ENCODE measurements at regions of chr12 and their contacts with region 1.

Region 1: GRCh38 chr12:94033101-94033500 is 115.3 kb upstream of the PLXNC1 start:
- DNase-seq: peak in 7 of 9 donors; percentile 28 to 68 (median 52)
- ATAC-seq: peak; percentile 90
- H3K4me3 ChIP-seq: peak overlapping the region; percentile 4
- H3K4me3 Mint-ChIP-seq: peak overlapping the region; percentile 44 to 89 (median 74)
- H3K27ac ChIP-seq: peak overlapping the region; percentile 52
- H3K27ac Mint-ChIP-seq: peak overlapping the region; percentile 47 to 97 (median 88)
- H3K4me1 ChIP-seq: peaks cover 0 to 45% of the 10 kb centered on the region in 2 donors
- H3K4me1 Mint-ChIP-seq: peaks cover 24 to 65% (median 52%) of the 10 kb centered on the region in 7 donors
- H3K27me3 ChIP-seq: no peaks in the 10 kb centered on the region
- H3K27me3 Mint-ChIP-seq: no peaks in the 10 kb centered on the region

Region 2: GRCh38 chr12:93742110-93742934 is 290.8 kb before region 1 on chr12:
- CTCF ChIA-PET with region 1: no interaction called
- POLR2A ChIA-PET with region 1: no interaction called
- intact Hi-C with region 1: loop called in 1 of 2 experiments (anchors 2 kb)
- DNase-seq: peak; percentile 25 to 63 (median 40)
- ATAC-seq: peak; percentile 96
- H3K4me3 ChIP-seq: peak overlapping the region; percentile 83
- H3K4me3 Mint-ChIP-seq: peak overlapping the region; percentile 83 to 97 (median 93)
- H3K27ac ChIP-seq: peak overlapping the region; percentile 74
- H3K27ac Mint-ChIP-seq: peak overlapping the region; percentile 29 to 98 (median 92)
- H3K4me1 ChIP-seq: peaks cover 0 to 13% of the 10 kb centered on the region in 2 donors
- H3K4me1 Mint-ChIP-seq: peaks cover 27 to 55% (median 41%) of the 10 kb centered on the region in 7 donors
- H3K27me3 ChIP-seq: no peaks in the 10 kb centered on the region
- H3K27me3 Mint-ChIP-seq: peaks cover 0 to 2% (median 0%) of the 10 kb centered on the region in 5 donors

Region 3: GRCh38 chr12:94012590-94012989 is 20.5 kb before region 1 on chr12:
- CTCF ChIA-PET with region 1: interaction called, 7 read pairs
- POLR2A ChIA-PET with region 1: interaction called, 22 read pairs
- intact Hi-C with region 1: loop called in 1 of 2 experiments (anchors 1 kb)
- DNase-seq: no peak
- ATAC-seq: no peak
- H3K4me3 ChIP-seq: no peak overlapping the region
- H3K4me3 Mint-ChIP-seq: peak overlapping the region in 2 of 10 donors; percentile 2 to 5
- H3K27ac ChIP-seq: no peak overlapping the region
- H3K27ac Mint-ChIP-seq: peak overlapping the region in 6 of 9 donors; percentile 4 to 89 (median 40)
- H3K4me1 ChIP-seq: peaks cover 0 to 18% of the 10 kb centered on the region in 2 donors
- H3K4me1 Mint-ChIP-seq: peaks cover 12 to 64% (median 40%) of the 10 kb centered on the region in 7 donors
- H3K27me3 ChIP-seq: no peaks in the 10 kb centered on the region
- H3K27me3 Mint-ChIP-seq: no peaks in the 10 kb centered on the region

Region 4: DNA sequence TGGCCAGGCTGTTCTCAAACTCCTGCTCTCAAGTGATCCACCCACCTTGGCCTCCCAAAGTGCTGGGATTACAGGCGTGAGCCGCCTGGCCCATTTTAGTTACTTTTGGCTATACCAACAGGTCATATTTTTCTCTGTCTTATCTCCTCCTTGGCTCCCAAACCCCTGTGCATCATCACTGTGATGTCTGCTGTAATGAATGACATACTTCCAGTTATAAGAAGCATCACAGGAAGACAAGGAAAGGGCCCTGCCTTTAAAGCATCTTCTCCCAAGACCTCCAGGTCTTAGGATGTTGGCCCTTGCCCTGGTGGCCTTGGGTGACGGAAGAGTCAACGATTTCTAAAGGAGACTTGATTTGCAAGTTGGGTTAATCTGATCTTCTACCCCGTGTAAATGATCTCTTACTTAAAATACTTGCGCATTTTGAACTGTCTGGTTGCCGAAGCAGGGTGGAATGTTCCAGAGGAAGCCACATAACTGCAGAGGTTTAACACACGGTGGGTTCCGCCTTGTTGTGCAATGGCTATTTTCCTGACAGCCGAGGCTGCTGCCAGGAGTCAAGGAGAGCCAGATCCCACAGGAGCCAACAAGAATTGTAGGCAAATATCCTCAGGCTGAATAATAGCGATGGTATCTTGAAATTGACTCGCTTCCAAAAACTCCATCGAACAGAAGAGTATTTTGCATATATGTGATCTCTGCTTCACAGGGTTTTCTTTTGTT is 59.6 kb after region 1 on chr12:
- CTCF ChIA-PET with region 1: no interaction called
- POLR2A ChIA-PET with region 1: no interaction called
- intact Hi-C with region 1: no loop called
- DNase-seq: no peak
- ATAC-seq: no peak
- H3K4me3 ChIP-seq: no peak overlapping the region
- H3K4me3 Mint-ChIP-seq: no peak overlapping the region
- H3K27ac ChIP-seq: no peak overlapping the region
- H3K27ac Mint-ChIP-seq: no peak overlapping the region
- H3K4me1 ChIP-seq: no peaks in the 10 kb centered on the region
- H3K4me1 Mint-ChIP-seq: peaks cover 0 to 4% (median 0%) of the 10 kb centered on the region in 7 donors
- H3K27me3 ChIP-seq: no peaks in the 10 kb centered on the region
- H3K27me3 Mint-ChIP-seq: peaks cover 0 to 4% (median 0%) of the 10 kb centered on the region in 5 donors